ENCODE measurements at regions of chr22 and their contacts with region 1.

Region 1: GRCh38 chr22:42169055-42169469 is 38.5 kb upstream of the CYP2D6 start:
- H3K4me3 ChIP-seq: no peak overlapping the region
- H3K27ac ChIP-seq: no peak overlapping the region
- H3K4me1 ChIP-seq: peaks cover 11% of the 10 kb centered on the region
- CTCF ChIP-seq: peak; percentile 98

Region 2: GRCh38 chr22:42192547-42192946 is 23.5 kb after region 1 on chr22:
- CTCF ChIA-PET with region 1: interaction called, 10 read pairs
- POLR2A ChIA-PET with region 1: no interaction called
- H3K4me3 ChIP-seq: no peak overlapping the region
- H3K27ac ChIP-seq: no peak overlapping the region
- H3K4me1 ChIP-seq: no peaks in the 10 kb centered on the region
- CTCF ChIP-seq: no peak

Region 3: GRCh38 chr22:42313804-42314581 is 144.9 kb after region 1 on chr22:
- CTCF ChIA-PET with region 1: interaction called, 12 read pairs
- POLR2A ChIA-PET with region 1: no interaction called
- H3K4me3 ChIP-seq: no peak overlapping the region
- H3K27ac ChIP-seq: no peak overlapping the region; the same call in 1 of the 2 replicates
- H3K4me1 ChIP-seq: peaks cover 17% of the 10 kb centered on the region
- CTCF ChIP-seq: no peak; the same call in 1 of the 2 replicates

Region 4: GRCh38 chr22:42437488-42438292 is 268.6 kb after region 1 on chr22:
- CTCF ChIA-PET with region 1: interaction called, 30 read pairs
- POLR2A ChIA-PET with region 1: no interaction called
- H3K4me3 ChIP-seq: peak overlapping the region; percentile 49
- H3K27ac ChIP-seq: no peak overlapping the region
- H3K4me1 ChIP-seq: peaks cover 9% of the 10 kb centered on the region; the same call in 1 of the 2 replicates
- CTCF ChIP-seq: peak; percentile 99